ENCODE measurements at regions of chr18 and their contacts with region 1.

Region 1: GRCh38 chr18:76398896-76399612 is 96.0 kb downstream of the ZNF516 start:
- DNase-seq: peak; percentile 90
- ATAC-seq: peak; percentile 97

Region 2: DNA sequence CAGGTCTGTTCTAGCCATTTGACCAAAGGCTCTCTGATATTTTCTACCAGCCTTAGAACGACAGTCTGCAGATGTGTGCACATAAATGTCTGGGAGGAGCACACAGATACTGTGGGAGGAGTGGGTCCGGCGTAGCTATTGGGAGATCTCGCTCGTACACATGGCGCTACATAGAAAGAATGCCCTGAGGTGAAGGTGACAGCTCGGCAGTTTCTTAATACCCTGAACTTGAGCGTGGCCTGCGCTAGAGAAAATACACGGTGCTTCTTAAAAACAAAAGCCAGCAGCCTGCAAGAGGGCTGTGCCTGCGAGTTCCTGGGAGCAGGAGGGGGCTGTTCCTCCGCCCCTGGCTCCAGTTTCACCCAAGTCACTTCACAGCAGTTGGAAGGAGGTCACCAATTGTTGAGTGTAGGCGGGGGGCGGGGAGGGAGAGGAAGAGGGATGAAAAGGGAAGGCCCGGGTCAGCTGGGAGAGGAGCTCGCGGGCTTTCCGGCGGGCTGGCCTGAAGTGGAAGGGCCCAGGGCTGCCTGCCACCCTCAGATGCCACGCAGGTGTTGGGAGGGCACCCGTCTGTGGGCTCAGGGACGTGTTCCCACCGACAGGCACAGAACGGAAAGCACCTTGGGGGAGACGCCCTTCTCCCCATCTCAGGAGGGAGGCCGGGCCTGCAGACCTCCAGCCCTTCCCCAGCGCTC is 220.7 kb after region 1 on chr18:
- intact Hi-C with region 1: loop called (anchors 5 kb)
- DNase-seq: peak; percentile 71
- ATAC-seq: peak; percentile 86

Region 3: DNA sequence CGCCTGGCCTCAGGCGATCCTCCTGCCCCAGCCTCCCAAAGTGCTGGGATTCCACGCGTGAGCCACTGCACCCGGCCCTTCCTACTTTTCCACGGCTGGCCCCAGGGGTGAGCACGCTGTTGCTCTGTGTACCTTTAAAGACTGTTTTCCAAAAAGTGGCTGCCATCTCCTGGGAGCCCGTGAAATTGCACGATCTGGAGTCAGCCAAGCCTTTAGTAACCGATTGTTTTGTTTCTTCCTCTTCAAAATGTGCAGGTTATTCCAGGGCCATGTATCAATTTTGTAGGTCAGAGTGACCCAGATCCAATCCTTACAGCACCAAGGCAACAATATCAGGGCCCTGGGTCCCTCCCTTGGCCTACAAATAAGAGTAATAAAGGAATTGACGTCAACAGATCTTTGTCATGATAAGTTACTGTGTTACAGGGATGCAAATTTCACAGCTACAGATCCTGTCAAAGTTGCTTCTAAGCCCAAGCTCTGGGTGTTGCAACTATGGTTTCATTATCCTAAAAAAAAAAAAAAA is 287.7 kb after region 1 on chr18:
- intact Hi-C with region 1: loop called (anchors 5 kb)
- DNase-seq: peak; percentile 55
- ATAC-seq: peak; percentile 90

Region 4: GRCh38 chr18:76709659-76710645 is 310.9 kb after region 1 on chr18:
- intact Hi-C with region 1: loop called (anchors 5 kb)
- DNase-seq: peak; percentile 81
- ATAC-seq: peak; percentile 94

Measured in Right ventricle myocardium superior (tissue), 1 donor.